ENCODE measurements at regions of chr14 and their contacts with region 1.

Region 1: DNA sequence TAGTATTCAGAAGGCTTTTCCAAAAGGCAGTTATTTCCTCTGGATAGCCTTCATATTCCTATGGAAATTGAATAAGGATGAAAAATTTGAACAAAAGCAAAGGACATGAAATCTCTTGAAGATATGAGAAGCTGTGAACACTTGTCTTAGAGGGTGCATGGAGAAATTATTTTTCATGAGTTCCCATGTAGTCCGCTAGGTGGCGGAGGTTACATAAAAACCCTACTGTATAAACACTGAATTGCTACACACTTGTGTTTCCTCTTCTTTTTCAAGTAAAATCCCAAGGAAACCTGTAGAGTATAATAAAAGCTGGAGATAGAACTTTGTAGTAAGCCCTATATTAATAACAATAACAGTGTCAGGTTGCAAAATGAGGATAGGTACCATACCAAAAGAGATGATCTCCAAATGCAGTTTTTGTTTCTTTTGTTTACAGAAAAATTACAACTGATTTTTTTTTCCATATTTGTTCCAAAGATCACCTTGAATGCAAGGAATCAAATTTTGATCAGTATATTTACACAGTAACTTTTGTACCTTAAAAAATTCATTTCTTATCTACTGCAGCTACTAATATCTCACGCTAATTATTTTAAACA is 37.8 kb upstream of the OR4E1 start:
- DNase-seq: peak; percentile 34
- H3K4me3 ChIP-seq: no peak overlapping the region
- H3K27ac ChIP-seq: no peak overlapping the region
- H3K4me1 ChIP-seq: no peaks in the 10 kb centered on the region
- H3K27me3 ChIP-seq: no peaks in the 10 kb centered on the region
- CTCF ChIP-seq: peak; percentile 86
- EP300 ChIP-seq: no peak
- RAD21 ChIP-seq: peak; percentile 11; the same call in 1 of the 2 replicates

Region 2: GRCh38 chr14:21699551-21699950 is 11.9 kb before region 1 on chr14:
- CTCF ChIA-PET with region 1: interaction called, 30 read pairs
- POLR2A ChIA-PET with region 1: no interaction called
- DNase-seq: no peak
- H3K4me3 ChIP-seq: no peak overlapping the region
- H3K27ac ChIP-seq: no peak overlapping the region
- H3K4me1 ChIP-seq: no peaks in the 10 kb centered on the region
- H3K27me3 ChIP-seq: peaks cover 9% of the 10 kb centered on the region; the same call in 1 of the 2 replicates
- CTCF ChIP-seq: no peak
- EP300 ChIP-seq: no peak
- RAD21 ChIP-seq: no peak

Region 3: GRCh38 chr14:21723431-21724045 is 12.1 kb after region 1 on chr14:
- CTCF ChIA-PET with region 1: interaction called, 12 read pairs
- POLR2A ChIA-PET with region 1: no interaction called
- DNase-seq: peak; percentile 22
- H3K4me3 ChIP-seq: 0 out of 4 replicates have a peak overlapping the region, but pooled peaks of 1 of the 2 experiments have one; percentile 43
- H3K27ac ChIP-seq: no peak overlapping the region
- H3K4me1 ChIP-seq: peaks cover 0 to 3% of the 10 kb centered on the region in 2 experiments; a peak in 1 of 4 replicates
- H3K27me3 ChIP-seq: peaks cover 20% of the 10 kb centered on the region
- CTCF ChIP-seq: peak; percentile 42; the same call in 1 of the 2 replicates
- EP300 ChIP-seq: no peak
- RAD21 ChIP-seq: no peak

Region 4: DNA sequence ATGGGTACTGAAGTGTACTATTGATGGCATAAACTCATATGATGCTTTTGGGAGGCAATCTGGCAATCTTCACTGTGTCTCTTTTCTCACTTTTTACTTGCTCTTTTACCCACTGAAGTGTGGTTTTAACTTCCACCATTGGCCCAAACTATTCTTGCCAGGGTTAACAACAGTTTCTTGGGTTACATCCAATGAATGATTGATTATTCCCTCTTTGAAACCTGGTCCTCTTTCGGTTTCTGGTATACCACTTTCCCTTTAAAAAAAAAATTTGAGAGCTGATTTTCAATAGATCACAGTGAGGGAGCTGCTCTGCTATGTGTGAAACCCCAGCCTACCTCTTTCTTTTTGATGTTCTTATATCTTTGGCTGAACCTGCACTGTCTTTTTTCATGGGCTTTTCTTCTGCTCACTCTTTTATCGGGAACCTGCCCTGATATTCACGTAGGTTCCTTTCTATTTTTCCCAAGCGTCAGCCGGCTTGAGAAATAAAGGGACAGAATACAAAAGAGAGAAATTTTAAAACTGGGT is 18.3 kb after region 1 on chr14:
- CTCF ChIA-PET with region 1: interaction called, 10 read pairs
- POLR2A ChIA-PET with region 1: no interaction called
- DNase-seq: no peak
- H3K4me3 ChIP-seq: no peak overlapping the region
- H3K27ac ChIP-seq: no peak overlapping the region
- H3K4me1 ChIP-seq: peaks cover 0 to 3% of the 10 kb centered on the region in 2 experiments; a peak in 1 of 4 replicates
- H3K27me3 ChIP-seq: peaks cover 14% of the 10 kb centered on the region; the same call in 1 of the 2 replicates
- CTCF ChIP-seq: no peak
- EP300 ChIP-seq: no peak
- RAD21 ChIP-seq: no peak

Measured in SK-N-SH (cell line).